Activated CD4-positive, alpha-beta memory T cell treated with anti-CD3 and anti-CD28 coated beads for 36 hours (primary cell): ENCODE measurements at regions of chr5 and their contacts with region 1.

Region 1: GRCh38 chr5:131634996-131635754 is at the start of gene RAPGEF6:
- DNase-seq: peak; percentile 99
- H3K4me3 Mint-ChIP-seq: peak within 1 kb of the TSS; percentile 98
- H3K27ac Mint-ChIP-seq: peak within 1 kb of the TSS; percentile 87
- H3K4me1 Mint-ChIP-seq: peaks cover 25% of the 10 kb centered on the region
- H3K27me3 Mint-ChIP-seq: peaks cover 3% of the 10 kb centered on the region
- total RNA-seq, gene RAPGEF6: 26.7 to 31.3 TPM

Region 2: DNA sequence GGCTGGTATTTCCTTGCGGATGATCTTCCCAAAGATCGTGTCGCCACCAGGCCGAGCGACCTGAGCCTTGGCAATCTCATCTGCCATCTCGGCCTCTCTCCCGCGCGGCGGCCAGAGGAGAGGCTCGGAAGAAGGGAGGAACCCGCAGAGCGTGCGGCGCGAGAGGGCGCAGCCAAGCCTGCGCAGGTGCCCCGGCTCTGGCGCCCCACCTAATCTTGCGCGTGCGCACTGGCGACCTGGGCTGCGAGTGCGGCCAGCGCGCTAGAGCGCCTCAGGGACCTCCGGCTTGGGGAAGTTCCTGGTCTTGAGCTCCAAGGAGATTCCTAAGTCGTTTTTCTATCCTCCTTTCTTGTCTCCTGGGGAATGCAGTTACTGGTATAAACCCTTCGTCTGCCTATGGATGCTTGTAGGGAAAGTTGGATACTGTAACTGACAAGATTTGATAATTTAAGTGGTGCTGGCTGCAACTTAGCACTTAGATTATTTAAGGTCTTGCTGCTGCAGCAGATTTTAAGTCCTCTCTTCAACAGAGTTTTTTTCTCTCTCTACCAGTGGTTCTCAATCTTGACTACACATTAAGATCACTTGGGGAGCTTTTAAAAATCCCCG is 470.0 kb before region 1 on chr5 and contains the start of gene HINT1:
- CTCF ChIA-PET with region 1: no interaction called
- POLR2A ChIA-PET with region 1: no interaction called
- intact Hi-C with region 1: loop called (anchors 1 kb)
- DNase-seq: peak; percentile 95
- H3K4me3 Mint-ChIP-seq: peak within 1 kb of the TSS; percentile 98
- H3K27ac Mint-ChIP-seq: peak within 1 kb of the TSS; percentile 99
- H3K4me1 Mint-ChIP-seq: peaks cover 45% of the 10 kb centered on the region
- H3K27me3 Mint-ChIP-seq: no peaks in the 10 kb centered on the region
- total RNA-seq, gene HINT1: 349 to 361 TPM

Region 3: GRCh38 chr5:131305906-131306305 is 329.3 kb before region 1 on chr5:
- CTCF ChIA-PET with region 1: no interaction called
- POLR2A ChIA-PET with region 1: no interaction called
- intact Hi-C with region 1: no loop called
- DNase-seq: no peak
- H3K4me3 Mint-ChIP-seq: no peak overlapping the region
- H3K27ac Mint-ChIP-seq: peak overlapping the region; percentile 79
- H3K4me1 Mint-ChIP-seq: peaks cover 61% of the 10 kb centered on the region
- H3K27me3 Mint-ChIP-seq: no peaks in the 10 kb centered on the region

Region 4: DNA sequence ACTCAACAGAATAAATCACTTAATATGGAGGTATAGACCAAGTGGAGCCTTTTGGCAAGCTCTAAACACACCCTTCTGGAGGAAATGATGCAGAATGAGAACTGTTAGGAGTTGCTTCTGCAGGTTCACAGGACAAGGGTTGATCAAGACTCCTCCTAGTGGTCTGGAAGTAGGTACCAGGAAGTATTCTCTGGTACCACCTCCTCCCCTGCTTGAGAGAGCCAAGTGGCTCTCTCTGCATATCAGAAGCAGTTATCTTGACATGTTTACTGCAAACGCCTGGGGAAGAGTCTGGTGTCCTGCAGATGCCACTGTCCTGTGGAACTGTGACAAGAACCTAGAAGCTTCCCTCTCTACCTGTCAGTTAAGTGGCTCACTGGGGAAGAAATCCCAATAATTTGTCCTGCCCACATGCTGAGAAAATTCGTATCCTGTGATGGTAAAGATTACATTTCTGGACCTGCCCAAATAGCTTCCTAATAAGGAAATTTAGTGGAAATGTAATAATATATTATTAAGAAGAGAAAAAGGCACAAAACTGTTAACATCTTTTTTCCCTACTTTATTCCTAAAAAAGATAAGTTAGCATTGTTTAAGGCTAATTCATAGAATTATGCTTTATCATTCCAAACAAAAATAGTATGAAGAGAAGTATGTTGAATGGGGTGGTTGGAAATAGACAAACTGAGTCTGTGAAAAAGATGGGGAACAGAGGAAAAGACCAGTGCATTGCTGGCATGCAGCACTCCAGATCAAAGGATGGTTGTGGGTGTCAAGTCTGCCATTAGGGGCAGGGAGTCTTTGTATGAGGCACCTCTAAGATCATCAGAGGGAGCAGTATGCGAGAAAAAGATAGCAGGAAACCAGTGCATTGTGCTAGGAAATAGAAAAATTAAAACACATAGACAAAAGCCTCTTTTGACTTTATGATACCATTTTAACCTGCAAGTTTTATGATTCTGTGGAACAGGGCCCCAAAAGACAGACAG is 252.5 kb before region 1 on chr5:
- CTCF ChIA-PET with region 1: no interaction called
- POLR2A ChIA-PET with region 1: no interaction called
- intact Hi-C with region 1: loop called (anchors 5 kb)
- DNase-seq: peak; percentile 58
- H3K4me3 Mint-ChIP-seq: peak overlapping the region; percentile 39
- H3K27ac Mint-ChIP-seq: peak overlapping the region; percentile 94
- H3K4me1 Mint-ChIP-seq: peaks cover 91% of the 10 kb centered on the region
- H3K27me3 Mint-ChIP-seq: no peaks in the 10 kb centered on the region

Region 5: DNA sequence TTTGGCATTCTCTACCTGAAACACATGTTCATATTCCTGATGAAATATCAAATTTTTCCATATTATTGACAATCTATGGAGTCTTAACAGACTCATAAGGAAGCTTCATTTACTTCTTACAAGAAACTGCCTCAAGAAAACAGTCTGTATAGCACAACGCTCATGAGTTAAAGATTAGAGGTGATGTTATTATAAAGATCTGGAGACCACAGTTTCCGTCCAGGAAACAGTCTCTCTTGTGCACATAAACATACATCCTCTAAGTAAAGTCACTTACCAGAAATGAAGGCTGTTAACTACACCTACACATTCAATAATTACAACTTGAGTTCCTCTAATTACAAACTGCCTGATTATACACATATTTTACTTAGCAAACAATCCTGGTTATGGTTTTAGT is 87.0 kb before region 1 on chr5:
- CTCF ChIA-PET with region 1: no interaction called
- POLR2A ChIA-PET with region 1: no interaction called
- intact Hi-C with region 1: loop called (anchors 2 kb)
- DNase-seq: no peak
- H3K4me3 Mint-ChIP-seq: peak overlapping the region; percentile 86
- H3K27ac Mint-ChIP-seq: peak overlapping the region; percentile 92
- H3K4me1 Mint-ChIP-seq: peaks cover 70% of the 10 kb centered on the region
- H3K27me3 Mint-ChIP-seq: no peaks in the 10 kb centered on the region

Region 6: DNA sequence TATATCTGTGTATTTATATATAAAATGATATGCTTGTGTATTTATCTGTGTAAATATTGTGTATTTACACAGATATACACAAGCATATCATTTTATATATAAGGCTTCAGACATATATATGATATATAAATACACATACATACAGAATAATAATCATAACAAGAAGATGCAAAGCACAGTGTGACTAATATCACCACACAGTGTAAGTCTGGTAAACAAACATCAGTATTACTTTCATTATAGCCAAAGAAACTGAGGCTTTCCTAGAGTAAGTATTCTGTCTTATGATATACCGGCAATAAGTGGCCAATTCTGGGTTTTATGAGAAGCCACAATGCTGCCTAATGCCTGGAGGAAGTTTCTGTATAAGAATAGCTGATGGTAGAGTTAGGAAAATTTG is 29.8 kb after region 1 on chr5:
- CTCF ChIA-PET with region 1: no interaction called
- POLR2A ChIA-PET with region 1: no interaction called
- intact Hi-C with region 1: no loop called
- DNase-seq: no peak
- H3K4me3 Mint-ChIP-seq: no peak overlapping the region
- H3K27ac Mint-ChIP-seq: no peak overlapping the region
- H3K4me1 Mint-ChIP-seq: no peaks in the 10 kb centered on the region
- H3K27me3 Mint-ChIP-seq: no peaks in the 10 kb centered on the region

Region 7: GRCh38 chr5:131796793-131797693 is 161.9 kb after region 1 on chr5 and contains the start of gene FNIP1:
- CTCF ChIA-PET with region 1: interaction called, 3 read pairs
- POLR2A ChIA-PET with region 1: interaction called, 3 read pairs
- intact Hi-C with region 1: loop called (anchors 1 kb)
- DNase-seq: peak; percentile 99
- H3K4me3 Mint-ChIP-seq: peak within 1 kb of the TSS; percentile 97
- H3K27ac Mint-ChIP-seq: peak within 1 kb of the TSS; percentile 84
- H3K4me1 Mint-ChIP-seq: peaks cover 33% of the 10 kb centered on the region
- H3K27me3 Mint-ChIP-seq: no peaks in the 10 kb centered on the region
- total RNA-seq, gene FNIP1: 14.0 to 15.9 TPM

Region 8: GRCh38 chr5:132293066-132293991 is 658.2 kb after region 1 on chr5:
- CTCF ChIA-PET with region 1: no interaction called
- POLR2A ChIA-PET with region 1: interaction called, 5 read pairs
- intact Hi-C with region 1: loop called (anchors 10 kb)
- DNase-seq: peak; percentile 87
- H3K4me3 Mint-ChIP-seq: peak overlapping the region; percentile 90
- H3K27ac Mint-ChIP-seq: peak overlapping the region; percentile 82
- H3K4me1 Mint-ChIP-seq: peaks cover 21% of the 10 kb centered on the region
- H3K27me3 Mint-ChIP-seq: peaks cover 10% of the 10 kb centered on the region